ENCODE measurements at regions of chrX and their contacts with region 1.

Region 1: DNA sequence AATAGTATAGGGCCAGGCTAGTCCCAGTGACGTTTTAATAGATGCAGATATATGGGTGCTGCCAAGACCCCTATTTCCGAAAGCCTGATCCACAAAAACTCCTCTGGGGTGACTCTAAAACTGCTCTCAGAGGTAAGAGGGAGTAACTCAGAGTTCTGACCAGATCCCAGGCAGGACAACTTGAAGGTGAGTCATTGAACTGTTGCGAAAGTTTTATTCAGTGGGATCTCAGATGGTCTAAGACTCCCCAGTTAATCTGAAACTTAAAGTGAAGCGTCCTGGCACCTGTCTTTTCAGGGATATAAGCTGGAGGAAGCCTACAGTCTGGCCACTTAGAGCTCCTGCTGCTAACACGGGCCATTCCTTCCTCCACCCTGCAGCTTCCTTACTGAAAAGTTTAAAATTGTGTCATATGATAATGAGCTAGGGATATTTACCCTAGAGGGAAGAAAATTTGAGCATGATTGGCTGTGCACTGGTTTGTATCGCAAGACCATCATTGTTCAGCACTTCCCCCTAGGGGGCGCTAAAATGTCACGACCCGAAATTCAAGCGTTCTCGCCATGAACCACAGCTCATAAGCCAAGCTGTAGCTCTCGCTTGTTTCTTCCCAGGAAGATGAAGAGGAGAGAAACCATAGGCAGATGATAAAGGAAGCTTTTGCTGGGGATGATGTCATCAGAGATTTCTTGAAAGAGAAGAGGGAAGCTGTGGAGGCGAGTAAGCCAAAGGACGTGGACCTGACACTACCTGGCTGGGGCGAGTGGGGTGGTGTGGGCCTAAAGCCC is 19.5 kb downstream of the UTP14A start:
- DNase-seq: peak; percentile 81
- ATAC-seq: peak; percentile 92
- H3K4me3 ChIP-seq: no peak overlapping the region
- H3K27ac ChIP-seq: no peak overlapping the region
- H3K4me1 ChIP-seq: no peaks in the 10 kb centered on the region
- H3K27me3 ChIP-seq: no peaks in the 10 kb centered on the region
- CTCF ChIP-seq: peak; percentile 69
- POLR2A ChIP-seq: no peak
- RAD21 ChIP-seq: peak; percentile 70

Region 2: DNA sequence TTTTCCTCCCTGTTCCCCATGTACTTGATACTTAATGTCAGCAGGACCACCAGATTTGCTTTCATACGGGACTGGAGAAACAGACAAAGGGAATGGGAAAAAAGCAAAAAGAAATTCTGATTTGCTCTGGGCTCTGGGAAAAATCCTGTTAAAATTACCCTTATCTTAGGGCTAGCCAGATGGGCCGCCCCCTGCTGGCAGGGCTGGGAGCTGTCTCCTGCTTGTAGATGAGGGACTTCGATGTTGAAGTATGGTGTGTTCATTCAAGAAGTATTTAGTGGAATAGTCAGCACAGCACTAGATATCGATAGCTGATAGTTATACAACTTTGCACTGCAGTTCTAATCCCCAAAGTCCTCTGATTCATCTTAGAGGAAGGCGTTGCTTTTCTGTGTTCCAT is 102.7 kb after region 1 on chrX:
- CTCF ChIA-PET with region 1: interaction called, 5 read pairs
- POLR2A ChIA-PET with region 1: no interaction called
- dilution Hi-C with region 1: no loop called
- in situ Hi-C with region 1: no loop called
- intact Hi-C with region 1: loop called (anchors 1 kb)
- DNase-seq: peak; percentile 39
- ATAC-seq: peak; percentile 66
- H3K4me3 ChIP-seq: no peak overlapping the region
- H3K27ac ChIP-seq: no peak overlapping the region
- H3K4me1 ChIP-seq: no peaks in the 10 kb centered on the region
- H3K27me3 ChIP-seq: peaks cover 1% of the 10 kb centered on the region; the same call in 1 of the 2 replicates
- CTCF ChIP-seq: peak; percentile 59
- POLR2A ChIP-seq: no peak
- RAD21 ChIP-seq: peak; percentile 50

Region 3: GRCh38 chrX:130060122-130061069 is 134.9 kb after region 1 on chrX:
- CTCF ChIA-PET with region 1: interaction called, 8 read pairs
- POLR2A ChIA-PET with region 1: no interaction called
- dilution Hi-C with region 1: no loop called
- in situ Hi-C with region 1: loop called (anchors 10 kb)
- intact Hi-C with region 1: loop called (anchors 1 kb)
- DNase-seq: peak; percentile 37
- ATAC-seq: peak; percentile 91
- H3K4me3 ChIP-seq: peak overlapping the region; percentile 76
- H3K27ac ChIP-seq: peak overlapping the region; percentile 38; the same call in 1 of the 2 replicates
- H3K4me1 ChIP-seq: peaks cover 1% of the 10 kb centered on the region; the same call in 1 of the 2 replicates
- H3K27me3 ChIP-seq: no peaks in the 10 kb centered on the region; the same call in 1 of the 2 replicates
- CTCF ChIP-seq: peak; percentile 80
- POLR2A ChIP-seq: no peak
- RAD21 ChIP-seq: peak; percentile 75

Region 4: GRCh38 chrX:130155564-130155963 is 230.1 kb after region 1 on chrX:
- CTCF ChIA-PET with region 1: no interaction called
- POLR2A ChIA-PET with region 1: no interaction called
- dilution Hi-C with region 1: no loop called
- in situ Hi-C with region 1: no loop called
- intact Hi-C with region 1: no loop called
- DNase-seq: no peak
- ATAC-seq: no peak
- H3K4me3 ChIP-seq: no peak overlapping the region
- H3K27ac ChIP-seq: no peak overlapping the region
- H3K4me1 ChIP-seq: no peaks in the 10 kb centered on the region
- H3K27me3 ChIP-seq: no peaks in the 10 kb centered on the region
- CTCF ChIP-seq: no peak
- POLR2A ChIP-seq: no peak
- RAD21 ChIP-seq: no peak

Region 5: DNA sequence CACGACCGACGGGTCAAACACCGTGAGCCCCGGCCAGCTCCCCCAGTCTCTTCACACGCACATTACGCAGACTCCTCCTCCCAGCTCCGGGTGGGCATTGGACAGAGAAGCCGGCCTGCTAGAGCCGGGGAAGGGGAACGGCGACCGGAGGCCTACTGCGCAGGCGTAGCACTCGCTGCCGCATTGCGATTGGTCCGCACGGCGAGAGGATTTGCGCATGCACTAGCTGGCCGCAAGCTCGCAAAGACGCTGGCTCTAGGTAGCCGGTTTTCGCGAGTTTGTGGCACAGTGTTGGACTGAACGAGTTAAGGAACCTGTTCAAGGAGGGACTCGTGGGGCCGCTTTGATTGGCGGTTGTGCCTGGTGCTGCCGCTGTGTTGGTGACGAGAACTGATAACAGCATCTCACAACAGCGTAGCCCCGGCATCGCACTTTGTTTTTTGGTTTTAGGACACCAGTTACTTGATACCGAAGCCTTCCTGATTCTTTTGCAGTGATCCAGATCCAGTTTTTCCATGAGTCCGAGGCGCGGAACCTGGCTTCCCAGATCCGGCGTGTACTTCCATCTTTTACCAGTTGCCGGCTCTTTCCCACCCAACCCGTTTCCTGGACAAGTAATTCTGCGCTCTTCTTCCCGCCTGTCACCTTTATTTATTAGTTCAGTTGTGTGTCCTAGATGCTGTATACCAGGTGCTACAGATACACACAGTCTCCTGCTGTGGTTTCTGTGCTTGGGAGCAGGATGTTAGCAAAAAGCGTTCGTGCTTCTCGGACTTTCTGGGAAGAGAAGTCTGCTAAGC is 240.4 kb after region 1 on chrX and contains the start of gene AIFM1:
- CTCF ChIA-PET with region 1: no interaction called
- POLR2A ChIA-PET with region 1: interaction called, 11 read pairs
- dilution Hi-C with region 1: no loop called
- in situ Hi-C with region 1: no loop called
- intact Hi-C with region 1: no loop called
- DNase-seq: peak; percentile 94
- ATAC-seq: peak; percentile 96
- H3K4me3 ChIP-seq: peak within 1 kb of the TSS; percentile 67
- H3K27ac ChIP-seq: peak within 1 kb of the TSS; percentile 85
- H3K4me1 ChIP-seq: no peaks in the 10 kb centered on the region
- H3K27me3 ChIP-seq: no peaks in the 10 kb centered on the region
- CTCF ChIP-seq: no peak
- POLR2A ChIP-seq: no peak
- RAD21 ChIP-seq: no peak
- total RNA-seq, gene AIFM1: 22.0 and 31.1 TPM in 2 replicates

Measured in IMR-90 (cell line).